CD14-positive monocyte (primary cell): ENCODE measurements at regions of chr10 and their contacts with region 1.

Region 1: DNA sequence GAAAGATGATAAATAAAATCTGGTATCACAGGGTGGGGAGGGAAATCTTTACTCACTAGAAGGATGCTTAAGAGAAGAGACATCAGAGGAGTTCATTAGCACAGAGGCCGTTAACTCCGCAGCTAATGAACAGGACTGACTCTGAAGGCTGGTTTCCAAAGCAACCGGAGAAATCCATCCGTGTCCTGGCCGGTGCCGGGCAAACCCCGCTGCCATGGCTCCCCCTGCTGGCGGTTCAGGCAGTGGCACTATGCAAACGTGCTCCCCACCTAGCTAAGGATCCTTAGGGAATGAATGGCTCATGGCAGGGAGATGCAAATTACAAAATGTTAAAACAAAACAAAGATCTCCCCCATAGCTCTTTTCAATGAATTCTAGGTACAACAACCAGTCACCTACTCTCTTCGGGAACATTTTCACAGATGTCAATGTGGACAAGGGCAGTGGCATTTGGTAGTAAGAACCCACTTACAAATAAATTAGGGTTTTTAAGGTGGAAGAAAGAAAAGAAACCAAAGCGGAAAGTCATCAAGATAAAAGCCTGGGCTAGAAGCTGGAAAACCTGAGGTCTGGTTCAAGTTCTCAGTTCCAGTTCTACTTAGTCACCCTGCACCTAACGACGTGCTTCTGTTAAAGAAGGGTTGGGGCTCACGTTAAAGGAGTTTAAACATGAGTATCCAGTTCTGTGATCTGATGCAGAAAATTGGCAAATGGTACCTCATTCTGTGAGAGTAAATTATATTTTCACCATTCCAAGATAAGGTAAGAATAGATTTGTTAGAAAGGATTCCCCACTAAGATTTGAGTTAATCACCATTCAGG is 138.2 kb downstream of the SVIL start:
- DNase-seq: peak; percentile 14 to 47 (median 29)
- H3K4me3 ChIP-seq: no peak overlapping the region
- H3K4me3 Mint-ChIP-seq: no peak overlapping the region
- H3K27ac ChIP-seq: no peak overlapping the region
- H3K27ac Mint-ChIP-seq: peak overlapping the region in 1 of 7 donors; percentile 11
- H3K4me1 ChIP-seq: no peaks in the 10 kb centered on the region
- H3K4me1 Mint-ChIP-seq: peaks cover 5% of the 10 kb centered on the region
- H3K27me3 ChIP-seq: no peaks in the 10 kb centered on the region
- H3K27me3 Mint-ChIP-seq: no peaks in the 10 kb centered on the region
- CTCF ChIP-seq: peak; percentile 93

Region 2: GRCh38 chr10:30687698-30688219 is 1191.2 kb after region 1 on chr10:
- intact Hi-C with region 1: loop called in 1 of 2 experiments (anchors 10 kb)
- DNase-seq: peak; percentile 33 to 58 (median 50)
- H3K4me3 ChIP-seq: no peak overlapping the region
- H3K4me3 Mint-ChIP-seq: no peak overlapping the region
- H3K27ac ChIP-seq: no peak overlapping the region
- H3K27ac Mint-ChIP-seq: no peak overlapping the region
- H3K4me1 ChIP-seq: peaks cover 4 to 8% of the 10 kb centered on the region in 2 donors
- H3K4me1 Mint-ChIP-seq: peaks cover 10% of the 10 kb centered on the region
- H3K27me3 ChIP-seq: peaks cover 8% of the 10 kb centered on the region in 2 donors
- H3K27me3 Mint-ChIP-seq: peaks cover 18 to 24% (median 23%) of the 10 kb centered on the region in 3 donors
- CTCF ChIP-seq: peak; percentile 96